ENCODE measurements at regions of chr4 and their contacts with region 1.

Region 1: DNA sequence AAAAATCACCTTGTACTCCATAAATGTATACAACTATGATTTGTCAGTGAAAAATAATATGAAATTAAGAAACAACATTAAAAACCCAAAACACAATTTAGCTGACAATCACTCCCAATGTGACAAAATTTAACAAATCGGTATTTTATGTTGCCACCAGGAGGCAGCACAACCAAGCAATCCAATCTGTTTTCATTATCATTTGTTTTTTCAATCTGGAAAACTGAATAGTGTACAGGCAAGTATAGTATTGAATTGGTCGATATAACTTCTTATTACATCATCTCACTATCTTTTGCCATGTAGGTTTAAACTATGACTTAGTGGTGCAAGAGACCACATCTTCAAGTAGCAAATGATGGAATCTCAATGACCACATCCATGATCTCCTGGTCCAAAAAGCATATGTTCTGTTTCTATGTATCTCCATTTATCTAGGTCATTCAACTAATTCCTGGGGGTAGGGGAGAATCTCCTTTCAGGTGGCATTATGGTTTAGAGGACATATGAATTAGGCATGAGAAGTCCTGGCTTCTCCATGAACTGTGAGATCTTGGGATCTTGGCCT is 112.9 kb upstream of the AGA start:
- ATAC-seq: peak in 2 of 8 experiments; percentile 17 to 28
- H3K4me3 ChIP-seq: no peak overlapping the region
- H3K27ac ChIP-seq: no peak overlapping the region
- H3K4me1 ChIP-seq: no peaks in the 10 kb centered on the region

Region 2: GRCh38 chr4:179307297-179308136 is 1752.4 kb after region 1 on chr4:
- in situ Hi-C with region 1: loop called in 1 of 9 experiments (anchors 25 kb)
- ATAC-seq: peak in 2 of 8 experiments; percentile 38 to 76
- H3K4me3 ChIP-seq: no peak overlapping the region
- H3K27ac ChIP-seq: no peak overlapping the region
- H3K4me1 ChIP-seq: no peaks in the 10 kb centered on the region